OCI-LY7 (cell line): ENCODE measurements at regions of chr19 and their contacts with region 1.

Region 1: GRCh38 chr19:50357178-50358100 is 8.0 kb downstream of the NAPSA start:
- DNase-seq: peak; percentile 73
- H3K4me3 ChIP-seq: peak overlapping the region; percentile 24
- H3K27ac ChIP-seq: no peak overlapping the region
- H3K4me1 ChIP-seq: peaks cover 34% of the 10 kb centered on the region
- CTCF ChIP-seq: peak; percentile 94

Region 2: DNA sequence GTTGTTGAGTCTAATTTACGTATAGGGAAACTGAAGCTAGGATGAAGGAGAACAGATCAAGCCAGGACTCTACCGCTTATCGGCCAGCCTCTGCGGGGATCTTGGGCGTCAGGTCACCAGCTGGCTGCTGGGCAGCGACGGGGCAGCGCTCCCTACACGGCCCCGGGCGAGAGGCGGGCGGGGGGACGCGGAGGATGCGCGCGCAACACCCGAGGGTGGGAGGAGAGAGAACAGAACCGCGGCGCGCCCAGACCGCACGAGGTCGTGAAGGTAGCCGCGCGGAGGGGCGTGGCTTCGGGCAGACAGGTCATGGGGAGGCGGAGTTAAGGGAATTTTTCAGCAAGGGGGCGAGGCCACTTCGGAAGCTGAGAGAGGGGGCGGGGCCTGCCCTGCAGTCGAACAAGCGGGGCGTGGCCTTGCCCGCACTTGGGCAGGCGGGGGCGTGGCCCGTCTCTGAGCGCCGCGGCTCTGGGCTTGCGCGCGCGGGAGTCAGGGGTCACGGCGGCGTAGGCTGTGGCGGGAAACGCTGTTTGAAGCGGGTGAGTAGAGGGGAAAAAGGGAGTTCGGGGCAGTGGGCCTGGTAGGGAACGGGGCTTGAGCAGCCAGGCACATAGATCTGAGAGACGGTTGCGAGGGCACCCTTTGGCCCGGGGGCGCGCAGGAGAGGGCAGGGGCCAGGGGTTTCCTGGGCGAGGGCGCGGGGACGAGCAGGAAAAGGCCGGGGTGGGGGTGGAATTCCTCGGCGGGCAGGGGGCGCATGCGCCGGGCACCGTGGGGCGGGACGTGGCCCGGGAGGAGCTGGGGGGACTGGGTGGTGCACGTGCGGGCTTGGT is 26.6 kb after region 1 on chr19 and contains the start of gene POLD1:
- CTCF ChIA-PET with region 1: no interaction called
- POLR2A ChIA-PET with region 1: no interaction called
- intact Hi-C with region 1: no loop called
- DNase-seq: peak; percentile 99
- H3K4me3 ChIP-seq: peak within 1 kb of the TSS; percentile 85
- H3K27ac ChIP-seq: peak within 1 kb of the TSS; percentile 59
- H3K4me1 ChIP-seq: peaks cover 19% of the 10 kb centered on the region
- CTCF ChIP-seq: no peak
- total RNA-seq, gene POLD1: 147 and 233 TPM in 2 replicates

Region 3: GRCh38 chr19:50401605-50402450 is 44.4 kb after region 1 on chr19:
- CTCF ChIA-PET with region 1: no interaction called
- POLR2A ChIA-PET with region 1: no interaction called
- intact Hi-C with region 1: no loop called
- DNase-seq: no peak
- H3K4me3 ChIP-seq: no peak overlapping the region
- H3K27ac ChIP-seq: no peak overlapping the region
- H3K4me1 ChIP-seq: no peaks in the 10 kb centered on the region
- CTCF ChIP-seq: peak; percentile 35

Region 4: DNA sequence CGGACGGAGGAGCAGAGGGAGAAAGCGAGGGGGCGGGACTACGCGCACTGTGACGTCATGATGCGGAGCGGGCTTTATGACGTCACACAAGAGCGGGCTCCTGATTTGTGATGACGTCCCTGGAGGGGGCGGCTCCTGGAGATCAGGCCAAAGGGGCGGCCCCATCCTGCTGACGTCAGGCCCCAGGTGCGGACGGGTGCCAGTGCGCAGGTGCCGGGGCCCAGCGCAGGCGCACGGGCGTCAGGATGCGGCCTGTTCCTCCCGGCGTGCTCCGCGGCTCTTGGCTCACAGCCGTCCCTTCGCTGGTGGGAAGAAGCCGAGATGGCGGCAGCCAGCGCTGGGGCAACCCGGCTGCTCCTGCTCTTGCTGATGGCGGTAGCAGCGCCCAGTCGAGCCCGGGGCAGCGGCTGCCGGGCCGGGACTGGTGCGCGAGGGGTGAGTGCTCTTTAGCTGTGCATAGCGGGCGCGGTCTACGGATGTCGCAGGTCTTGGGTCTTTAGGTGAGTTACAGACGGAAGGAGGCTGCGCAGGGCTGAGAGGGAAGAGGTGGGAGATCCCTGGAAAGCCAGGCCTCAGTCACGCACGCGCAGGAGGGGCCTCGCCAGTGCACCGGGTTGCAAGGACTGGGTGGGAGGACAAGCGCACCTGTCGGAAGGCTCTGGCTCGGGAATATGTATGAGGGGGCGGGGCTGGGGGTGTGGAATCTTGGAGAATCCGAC is 118.9 kb after region 1 on chr19 and contains the starts of genes EMC10 and GARIN5A:
- CTCF ChIA-PET with region 1: no interaction called
- POLR2A ChIA-PET with region 1: no interaction called
- intact Hi-C with region 1: no loop called
- DNase-seq: peak; percentile 98
- H3K4me3 ChIP-seq: peak within 1 kb of the TSS; percentile 98
- H3K27ac ChIP-seq: peak within 1 kb of the TSS; percentile 73
- H3K4me1 ChIP-seq: peaks cover 10% of the 10 kb centered on the region
- CTCF ChIP-seq: no peak
- total RNA-seq, gene EMC10: 44.4 and 45.2 TPM in 2 replicates
- total RNA-seq, gene GARIN5A: 0.63 and 0.85 TPM in 2 replicates

Region 5: GRCh38 chr19:50556282-50557008 is 199.0 kb after region 1 on chr19:
- CTCF ChIA-PET with region 1: no interaction called
- POLR2A ChIA-PET with region 1: no interaction called
- intact Hi-C with region 1: loop called (anchors 2 kb)
- DNase-seq: peak; percentile 82
- H3K4me3 ChIP-seq: peak overlapping the region; percentile 69
- H3K27ac ChIP-seq: no peak overlapping the region
- H3K4me1 ChIP-seq: no peaks in the 10 kb centered on the region
- CTCF ChIP-seq: peak; percentile 100